Astrocyte of the cerebellum (primary cell): ENCODE measurements at regions of chr2 and their contacts with region 1.

Region 1: DNA sequence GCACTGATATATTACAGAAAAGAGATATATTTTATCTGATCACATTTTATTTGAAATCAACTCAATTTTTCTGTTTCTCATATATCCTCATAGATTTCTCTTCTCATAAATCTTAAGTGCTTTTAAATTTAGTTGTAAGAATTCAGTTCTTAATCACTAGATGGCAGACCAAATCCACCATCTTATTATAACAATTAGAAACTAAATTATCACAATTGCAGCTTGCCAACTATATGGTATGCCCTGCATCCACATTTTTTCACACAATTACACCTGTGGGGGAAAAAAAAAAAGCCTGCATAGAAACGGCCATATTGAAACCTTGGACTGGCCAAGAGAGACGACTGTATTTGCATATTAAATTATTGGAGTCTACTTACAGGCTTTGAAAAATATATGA is 64.4 kb downstream of the COL5A2 start:
- DNase-seq: peak; percentile 40
- H3K4me3 ChIP-seq: no peak overlapping the region
- CTCF ChIP-seq: no peak

Region 2: DNA sequence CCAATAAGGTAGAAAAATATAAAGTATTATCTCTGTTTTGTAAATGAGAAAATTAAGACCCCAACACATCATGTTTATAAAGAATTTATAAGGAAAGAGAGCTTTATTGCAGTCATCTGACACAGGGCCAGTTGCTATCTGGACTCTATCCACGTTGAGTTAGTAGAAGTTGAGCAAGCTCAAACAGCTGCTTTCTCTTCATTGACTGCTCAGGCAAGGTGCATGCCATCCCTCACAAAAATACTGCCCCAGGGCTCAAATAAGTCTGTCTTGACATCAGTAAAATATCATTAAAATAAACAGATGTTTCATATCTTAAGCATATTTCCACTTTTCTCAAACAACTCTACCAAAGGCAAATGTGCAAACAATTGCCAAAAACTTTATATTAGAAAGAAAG is 49.6 kb after region 1 on chr2:
- in situ Hi-C with region 1: no loop called
- DNase-seq: no peak
- H3K4me3 ChIP-seq: no peak overlapping the region
- CTCF ChIP-seq: no peak

Region 3: DNA sequence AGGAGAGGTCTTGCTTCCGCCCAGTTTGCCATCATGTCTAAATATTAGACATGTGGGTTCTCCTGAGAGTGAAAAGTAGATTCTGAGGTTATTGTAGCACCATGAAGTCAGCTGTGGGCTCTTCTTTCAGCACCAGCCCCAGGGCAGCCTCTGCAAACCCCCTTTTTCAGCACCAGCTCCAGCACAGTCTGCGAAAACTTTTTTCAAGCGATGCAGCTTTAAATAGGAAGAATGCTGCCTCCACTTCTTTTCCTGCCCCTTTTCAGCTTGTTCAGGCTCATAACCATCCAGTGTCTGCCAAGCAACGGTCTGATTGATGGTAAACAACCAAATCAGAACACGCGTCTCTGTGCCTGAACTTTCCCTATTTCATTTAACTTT is 64.4 kb after region 1 on chr2 and contains the start of gene COL5A2:
- in situ Hi-C with region 1: loop called (anchors 10 kb)
- DNase-seq: peak; percentile 80
- H3K4me3 ChIP-seq: peak within 1 kb of the TSS; percentile 78
- CTCF ChIP-seq: no peak

Region 4: GRCh38 chr2:189191766-189192165 is 76.6 kb after region 1 on chr2:
- in situ Hi-C with region 1: no loop called
- DNase-seq: no peak
- H3K4me3 ChIP-seq: no peak overlapping the region
- CTCF ChIP-seq: no peak

Region 5: DNA sequence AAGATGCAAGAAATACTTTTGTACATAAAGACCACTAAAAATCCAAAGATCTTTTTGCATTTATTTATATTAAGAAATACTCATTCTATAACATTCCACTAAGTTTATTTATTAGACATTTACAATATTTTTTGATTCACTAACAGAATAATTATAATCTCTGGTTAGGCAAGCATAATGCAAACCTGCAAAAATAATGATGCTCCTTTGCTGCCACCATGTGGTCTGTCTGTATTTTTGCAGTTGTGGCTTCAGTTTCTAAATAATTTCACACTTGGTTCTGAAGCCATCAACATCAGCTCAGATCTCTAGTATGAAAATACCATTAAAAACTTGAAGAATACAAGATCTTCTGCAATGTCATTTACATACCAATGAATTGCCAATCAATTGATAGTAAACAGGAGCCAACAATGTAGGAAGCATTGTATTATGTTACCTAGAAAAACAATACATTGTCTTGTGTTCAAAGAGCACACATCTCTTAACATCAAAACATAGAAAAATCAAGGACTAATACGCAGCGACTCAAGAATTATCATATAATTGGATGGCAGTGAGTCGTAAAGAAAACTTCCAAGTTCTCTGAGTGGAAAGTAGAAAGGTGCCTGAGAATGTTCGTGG is 297.3 kb after region 1 on chr2:
- in situ Hi-C with region 1: loop called (anchors 25 kb)
- DNase-seq: peak; percentile 66
- H3K4me3 ChIP-seq: no peak overlapping the region
- CTCF ChIP-seq: peak; percentile 42